A549 (cell line): ENCODE measurements at regions of chrX and their contacts with region 1.

Region 1: GRCh38 chrX:30504309-30504708 is 73.3 kb downstream of the TASL start:
- DNase-seq: peak in 1 of 2 experiments; percentile 30
- ATAC-seq: no peak
- H3K4me3 ChIP-seq: no peak overlapping the region
- H3K27ac ChIP-seq: no peak overlapping the region
- H3K4me1 ChIP-seq: no peaks in the 10 kb centered on the region
- CTCF ChIP-seq: peak; percentile 60
- EP300 ChIP-seq: no peak
- POLR2A ChIP-seq: no peak
- RAD21 ChIP-seq: peak; percentile 71 to 75

Region 2: DNA sequence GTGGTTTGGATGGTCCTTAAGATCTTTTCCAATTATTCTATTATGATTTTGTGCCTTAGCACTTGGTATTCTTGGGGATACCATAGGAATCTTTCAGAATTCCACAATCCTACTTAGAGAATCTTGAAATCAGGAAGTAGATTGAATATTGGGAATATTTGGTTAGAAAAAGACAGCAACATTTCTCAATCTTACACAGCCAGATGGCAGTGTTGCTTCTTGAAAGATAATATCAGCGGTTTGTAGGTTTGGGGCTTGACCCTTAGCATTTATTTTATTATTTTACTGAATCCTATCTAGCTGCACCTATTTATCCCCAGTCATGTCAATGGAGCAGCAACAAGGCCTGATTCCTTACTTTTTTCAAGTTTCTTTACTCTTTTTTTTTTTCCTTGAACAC is 228.8 kb before region 1 on chrX:
- CTCF ChIA-PET with region 1: interaction called, 59 read pairs
- POLR2A ChIA-PET with region 1: no interaction called
- DNase-seq: peak in 1 of 2 experiments; percentile 55
- ATAC-seq: peak; percentile 39 to 79; a peak in 4 of 6 replicates
- H3K4me3 ChIP-seq: no peak overlapping the region
- H3K27ac ChIP-seq: no peak overlapping the region
- H3K4me1 ChIP-seq: peaks cover 3% of the 10 kb centered on the region; the same call in 1 of the 3 replicates
- CTCF ChIP-seq: peak; percentile 66
- EP300 ChIP-seq: no peak
- POLR2A ChIP-seq: no peak
- RAD21 ChIP-seq: peak; percentile 86 to 87